Astrocyte of the cerebellum (primary cell): ENCODE measurements at regions of chr1 and their contacts with region 1.

Region 1: DNA sequence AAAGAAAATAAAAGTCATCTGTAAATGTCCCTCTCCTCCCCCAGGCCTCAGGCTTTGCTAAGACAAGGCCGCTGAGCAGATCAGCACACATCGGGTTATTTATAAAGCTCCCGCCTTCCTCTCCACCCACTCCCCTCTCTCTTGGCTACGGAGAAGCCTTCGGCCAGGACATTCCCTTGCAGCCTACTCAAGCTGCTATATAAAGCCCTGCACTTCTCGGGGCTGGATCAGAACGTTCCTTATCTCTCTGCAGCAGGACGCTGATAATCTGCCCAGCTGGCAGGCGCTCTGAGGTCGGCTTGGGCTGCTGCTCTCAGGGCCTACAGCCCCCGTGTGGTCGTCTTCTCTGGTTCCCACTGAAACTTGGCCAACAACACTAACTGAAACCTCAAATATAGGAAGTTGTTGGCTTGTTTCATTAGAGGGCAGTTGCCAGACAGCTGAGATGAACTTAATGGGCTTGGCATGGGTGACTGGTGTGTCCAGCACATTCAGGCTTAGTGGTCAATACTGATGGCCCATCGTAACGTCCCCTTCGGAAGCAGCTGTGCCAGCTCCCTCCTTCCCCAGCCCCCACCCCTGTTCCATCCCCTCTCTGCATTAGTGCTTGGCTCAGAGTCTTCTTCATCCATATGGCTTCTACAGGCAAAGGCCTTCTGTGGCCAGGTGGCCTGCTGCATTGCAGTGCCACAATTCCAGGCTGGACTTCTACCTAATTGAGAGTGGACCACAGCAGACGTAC is 64.6 kb downstream of the IER5 start:
- DNase-seq: peak; percentile 52
- H3K4me3 ChIP-seq: no peak overlapping the region
- CTCF ChIP-seq: peak; percentile 36

Region 2: DNA sequence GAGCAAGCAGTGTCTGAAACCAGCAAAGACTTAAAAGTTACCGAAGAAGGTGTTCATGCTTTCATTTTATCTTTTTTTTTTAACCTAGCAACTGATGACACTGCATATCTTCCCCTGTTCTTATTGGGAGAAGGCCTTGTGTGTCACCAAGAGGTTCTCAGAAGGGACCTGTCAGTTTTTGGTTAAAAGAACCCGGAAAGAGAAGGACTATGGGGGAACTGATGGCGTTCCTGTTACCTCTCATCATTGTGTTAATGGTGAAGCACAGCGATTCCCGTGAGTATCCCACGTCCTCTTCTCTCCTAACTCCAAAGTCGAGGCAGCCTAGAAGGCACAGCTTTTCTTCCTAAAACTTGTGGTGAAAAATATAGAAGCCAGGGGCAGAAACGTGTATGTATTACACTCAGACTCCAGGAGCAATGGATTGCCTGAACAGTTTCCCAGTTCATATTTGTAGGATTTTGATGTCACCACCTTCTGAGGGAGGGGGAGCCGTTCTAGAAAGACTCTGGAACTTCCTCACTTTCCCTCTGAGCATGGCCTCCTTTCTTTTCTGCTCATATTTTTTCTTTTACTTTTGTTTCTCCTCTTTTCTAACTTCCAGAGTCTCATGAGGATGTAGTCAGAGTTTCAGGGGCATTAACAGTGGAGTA is 119.1 kb before region 1 on chr1 and contains the start of gene MR1:
- in situ Hi-C with region 1: loop called (anchors 5 kb)
- DNase-seq: peak; percentile 41
- H3K4me3 ChIP-seq: no peak within 1 kb of the TSS
- CTCF ChIP-seq: no peak

Region 3: GRCh38 chr1:181062836-181063428 is 90.1 kb before region 1 on chr1:
- in situ Hi-C with region 1: no loop called
- DNase-seq: no peak
- H3K4me3 ChIP-seq: no peak overlapping the region
- CTCF ChIP-seq: no peak